CD4-positive, alpha-beta memory T cell (primary cell): ENCODE measurements at regions of chr1 and their contacts with region 1.

Region 1: GRCh38 chr1:89804642-89805237 is 16.1 kb upstream of the LRRC8D start:
- DNase-seq: peak; percentile 73 to 81 (median 77)
- H3K4me3 ChIP-seq: no peak overlapping the region
- H3K4me3 Mint-ChIP-seq: no peak overlapping the region
- H3K27ac ChIP-seq: no peak overlapping the region
- H3K27ac Mint-ChIP-seq: no peak overlapping the region
- H3K4me1 ChIP-seq: peaks cover 4% of the 10 kb centered on the region
- H3K4me1 Mint-ChIP-seq: no peaks in the 10 kb centered on the region
- H3K27me3 ChIP-seq: no peaks in the 10 kb centered on the region
- H3K27me3 Mint-ChIP-seq: peaks cover 0 to 1% of the 10 kb centered on the region in 2 donors

Region 2: DNA sequence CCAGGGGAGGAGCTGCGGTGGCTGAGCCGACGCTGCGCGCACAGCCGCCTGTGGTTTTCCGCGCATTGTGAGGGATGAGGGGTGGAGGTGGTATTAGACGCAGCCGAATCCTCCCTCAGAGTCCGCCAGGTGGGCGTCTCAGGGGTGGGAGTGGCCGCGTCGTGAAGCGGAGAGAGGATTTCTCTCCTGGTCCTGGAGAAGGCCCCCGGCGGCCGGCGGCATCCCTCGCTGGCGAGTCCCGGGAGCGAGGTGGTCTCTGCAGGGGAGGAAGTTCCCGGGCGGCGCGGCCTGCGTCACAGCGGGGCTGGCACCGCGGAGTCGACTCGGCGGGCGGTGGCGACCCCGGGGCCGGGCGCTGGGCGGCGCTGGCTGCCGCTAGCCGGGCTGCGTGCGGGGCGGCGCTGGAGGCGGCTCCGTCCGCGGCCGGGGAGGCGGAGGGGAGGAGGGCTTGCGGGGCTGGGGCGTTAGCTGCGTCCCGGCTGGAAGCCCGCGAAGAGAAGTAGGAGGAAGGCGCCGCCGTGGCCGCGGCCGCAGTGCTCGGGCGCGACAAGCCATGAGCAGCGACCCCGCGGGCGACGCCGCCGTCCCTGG is 172.0 kb before region 1 on chr1 and contains the start of gene LRRC8C:
- CTCF ChIA-PET with region 1: no interaction called
- POLR2A ChIA-PET with region 1: no interaction called
- intact Hi-C with region 1: no loop called
- DNase-seq: peak; percentile 90 to 95 (median 92)
- H3K4me3 ChIP-seq: peak within 1 kb of the TSS; percentile 73 to 89
- H3K4me3 Mint-ChIP-seq: peak within 1 kb of the TSS; percentile 96 to 99 (median 98)
- H3K27ac ChIP-seq: peak within 1 kb of the TSS; percentile 96
- H3K27ac Mint-ChIP-seq: peak within 1 kb of the TSS; percentile 96 to 99 (median 98)
- H3K4me1 ChIP-seq: peaks cover 76% of the 10 kb centered on the region
- H3K4me1 Mint-ChIP-seq: peaks cover 60 to 90% (median 74%) of the 10 kb centered on the region in 4 donors
- H3K27me3 ChIP-seq: no peaks in the 10 kb centered on the region
- H3K27me3 Mint-ChIP-seq: no peaks in the 10 kb centered on the region
- total RNA-seq, gene LRRC8C: 56.7 to 57.1 TPM

Region 3: DNA sequence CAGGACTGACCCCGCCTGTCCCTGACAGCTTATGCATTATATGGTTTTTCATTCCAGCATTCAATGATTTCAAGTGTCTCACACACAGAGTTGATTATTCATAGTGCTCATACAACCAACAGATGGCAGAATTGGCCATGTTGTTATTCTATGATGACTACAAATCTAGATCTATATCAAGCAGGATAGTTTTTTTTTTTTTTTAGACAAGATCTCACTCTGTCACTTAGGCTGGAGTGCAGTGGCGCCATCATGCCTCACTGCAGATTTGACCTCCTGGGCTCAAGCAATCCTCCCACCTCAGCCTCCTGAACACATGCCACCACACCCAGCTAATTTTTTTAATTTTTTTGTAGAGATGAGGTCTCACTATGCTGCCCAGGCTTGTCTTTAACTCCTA is 24.0 kb before region 1 on chr1:
- CTCF ChIA-PET with region 1: interaction called, 17 read pairs
- POLR2A ChIA-PET with region 1: no interaction called
- intact Hi-C with region 1: loop called (anchors 2 kb)
- DNase-seq: peak; percentile 24 to 47 (median 33)
- H3K4me3 ChIP-seq: no peak overlapping the region
- H3K4me3 Mint-ChIP-seq: peak overlapping the region in 3 of 8 donors; percentile 0 to 67 (median 10)
- H3K27ac ChIP-seq: no peak overlapping the region
- H3K27ac Mint-ChIP-seq: peak overlapping the region in 2 of 7 donors; percentile 20 to 52
- H3K4me1 ChIP-seq: peaks cover 21% of the 10 kb centered on the region
- H3K4me1 Mint-ChIP-seq: peaks cover 19 to 24% (median 22%) of the 10 kb centered on the region in 4 donors
- H3K27me3 ChIP-seq: no peaks in the 10 kb centered on the region
- H3K27me3 Mint-ChIP-seq: no peaks in the 10 kb centered on the region

Region 4: GRCh38 chr1:89820422-89821321 is 15.9 kb after region 1 on chr1 and contains the start of gene LRRC8D:
- CTCF ChIA-PET with region 1: interaction called, 5 read pairs
- POLR2A ChIA-PET with region 1: interaction called, 6 read pairs
- intact Hi-C with region 1: loop called (anchors 2 kb)
- DNase-seq: peak; percentile 54 to 78 (median 63)
- H3K4me3 ChIP-seq: peak within 1 kb of the TSS; percentile 44 to 60
- H3K4me3 Mint-ChIP-seq: peak within 1 kb of the TSS; percentile 87 to 92 (median 90)
- H3K27ac ChIP-seq: peak within 1 kb of the TSS; percentile 65
- H3K27ac Mint-ChIP-seq: peak within 1 kb of the TSS; percentile 85 to 92 (median 88)
- H3K4me1 ChIP-seq: peaks cover 11% of the 10 kb centered on the region
- H3K4me1 Mint-ChIP-seq: peaks cover 23 to 32% (median 25%) of the 10 kb centered on the region in 4 donors
- H3K27me3 ChIP-seq: no peaks in the 10 kb centered on the region
- H3K27me3 Mint-ChIP-seq: no peaks in the 10 kb centered on the region
- total RNA-seq, gene LRRC8D: 56.8 to 63.2 TPM

Region 5: DNA sequence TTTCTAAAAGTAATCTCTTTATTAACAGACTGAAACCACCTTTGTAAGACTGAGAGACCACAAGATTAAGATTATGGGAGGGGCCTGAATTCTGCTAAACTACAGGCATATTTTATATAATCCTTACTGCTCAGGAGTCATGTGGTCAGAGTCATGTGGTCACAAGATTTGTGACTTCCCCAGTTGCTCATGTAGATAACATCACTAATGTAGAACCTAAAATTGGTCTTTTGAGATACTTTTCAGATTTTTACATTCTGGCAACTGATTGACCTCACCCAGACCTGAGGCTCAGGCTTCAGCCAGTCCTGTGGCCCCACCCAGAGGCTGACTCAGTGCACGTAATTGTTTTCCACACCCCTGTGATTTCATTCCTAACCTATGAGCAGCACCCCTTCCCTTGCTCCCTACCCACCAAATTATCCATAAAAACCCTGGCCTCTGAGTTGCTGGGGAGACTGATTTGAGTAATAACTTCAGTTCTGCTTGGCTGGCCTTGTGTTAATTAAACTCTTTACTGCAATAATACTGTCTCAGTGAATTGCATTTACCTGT is 148.4 kb after region 1 on chr1:
- CTCF ChIA-PET with region 1: interaction called, 5 read pairs
- POLR2A ChIA-PET with region 1: no interaction called
- intact Hi-C with region 1: loop called (anchors 1 kb)
- DNase-seq: peak in 3 of 5 donors; percentile 15 to 21 (median 17)
- H3K4me3 ChIP-seq: no peak overlapping the region
- H3K4me3 Mint-ChIP-seq: no peak overlapping the region
- H3K27ac ChIP-seq: no peak overlapping the region
- H3K27ac Mint-ChIP-seq: no peak overlapping the region
- H3K4me1 ChIP-seq: peaks cover 12% of the 10 kb centered on the region
- H3K4me1 Mint-ChIP-seq: peaks cover 16 to 20% (median 17%) of the 10 kb centered on the region in 4 donors
- H3K27me3 ChIP-seq: no peaks in the 10 kb centered on the region
- H3K27me3 Mint-ChIP-seq: peaks cover 0 to 2% of the 10 kb centered on the region in 2 donors

Region 6: GRCh38 chr1:90027281-90027680 is 222.5 kb after region 1 on chr1:
- CTCF ChIA-PET with region 1: no interaction called
- POLR2A ChIA-PET with region 1: no interaction called
- intact Hi-C with region 1: no loop called
- DNase-seq: no peak
- H3K4me3 ChIP-seq: no peak overlapping the region
- H3K4me3 Mint-ChIP-seq: no peak overlapping the region
- H3K27ac ChIP-seq: no peak overlapping the region
- H3K27ac Mint-ChIP-seq: no peak overlapping the region
- H3K4me1 ChIP-seq: no peaks in the 10 kb centered on the region
- H3K4me1 Mint-ChIP-seq: peaks cover 0 to 2% (median 0%) of the 10 kb centered on the region in 4 donors
- H3K27me3 ChIP-seq: no peaks in the 10 kb centered on the region
- H3K27me3 Mint-ChIP-seq: no peaks in the 10 kb centered on the region